ENCODE measurements at regions of chr18 and their contacts with region 1.

Region 1: DNA sequence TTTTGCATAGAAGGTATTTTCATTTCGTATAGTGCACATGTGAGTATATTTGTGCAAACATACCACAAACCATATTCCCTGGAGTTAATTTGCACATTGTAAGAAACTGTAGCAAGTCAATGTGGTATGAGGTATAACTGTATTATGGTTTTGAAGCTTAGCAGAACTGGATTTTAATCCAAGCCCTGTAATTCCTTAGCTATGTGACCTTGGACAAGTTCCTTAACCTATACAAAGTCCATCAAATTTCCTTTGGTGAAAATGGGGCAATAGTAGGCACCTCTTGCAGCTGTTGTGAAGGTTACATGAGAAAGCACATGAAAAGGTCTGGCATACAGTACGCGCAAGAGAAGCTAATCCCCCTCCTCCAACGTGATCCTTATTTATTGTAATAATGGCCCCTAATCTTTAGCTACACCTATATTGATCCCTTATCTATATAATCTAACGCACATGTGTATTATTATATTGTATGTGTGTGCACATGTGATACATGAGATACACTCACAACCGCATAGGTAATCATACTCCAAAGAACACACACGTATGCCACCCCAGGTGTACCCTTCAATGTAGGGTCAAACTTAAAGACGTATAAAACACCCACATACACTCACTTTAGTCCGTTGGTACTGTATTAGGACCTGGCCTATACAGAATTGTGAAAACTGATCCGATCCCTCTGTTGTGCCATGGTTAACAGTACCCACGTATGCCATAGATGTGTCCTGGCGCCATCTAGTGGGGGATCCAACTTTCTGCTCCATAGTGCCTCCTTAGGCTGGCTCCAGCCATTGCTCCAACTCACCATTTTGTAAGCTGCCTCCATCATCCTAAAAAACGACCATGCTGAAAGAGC is 402.9 kb upstream of the SLC14A2 start:
- DNase-seq: peak; percentile 81
- H3K4me3 Mint-ChIP-seq: no peak overlapping the region
- H3K27ac Mint-ChIP-seq: no peak overlapping the region
- H3K4me1 Mint-ChIP-seq: no peaks in the 10 kb centered on the region
- H3K27me3 Mint-ChIP-seq: peaks cover 11% of the 10 kb centered on the region

Region 2: DNA sequence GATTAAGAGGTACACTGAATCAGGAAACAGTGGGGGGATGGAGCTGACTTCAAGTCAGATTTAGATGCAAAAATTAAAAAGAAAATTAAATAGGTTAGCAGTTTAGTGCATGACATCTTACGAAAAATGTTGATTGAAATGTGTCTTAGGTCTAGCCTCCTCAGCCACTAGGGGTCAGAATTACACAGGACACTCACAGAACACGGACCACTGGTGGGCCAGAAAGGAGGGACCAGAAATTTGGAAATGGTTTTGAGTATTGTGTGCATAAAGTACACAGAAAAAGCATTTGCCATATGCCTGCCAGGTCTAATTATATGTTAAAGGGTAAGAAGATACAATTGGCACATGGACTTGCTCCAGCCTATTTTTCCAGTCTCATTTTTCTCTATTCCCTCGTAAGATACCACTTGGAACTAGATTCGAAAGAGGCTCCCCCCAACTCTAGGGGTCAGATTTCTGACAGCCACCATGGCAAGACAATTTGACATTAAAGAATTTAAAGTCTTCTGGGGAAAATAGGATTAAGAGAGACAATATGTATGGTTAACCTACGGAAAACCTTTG is 1082.0 kb before region 1 on chr18:
- CTCF ChIA-PET with region 1: no interaction called
- POLR2A ChIA-PET with region 1: no interaction called
- intact Hi-C with region 1: loop called (anchors 10 kb)
- DNase-seq: no peak
- H3K4me3 Mint-ChIP-seq: no peak overlapping the region
- H3K27ac Mint-ChIP-seq: no peak overlapping the region
- H3K4me1 Mint-ChIP-seq: no peaks in the 10 kb centered on the region
- H3K27me3 Mint-ChIP-seq: no peaks in the 10 kb centered on the region

Region 3: DNA sequence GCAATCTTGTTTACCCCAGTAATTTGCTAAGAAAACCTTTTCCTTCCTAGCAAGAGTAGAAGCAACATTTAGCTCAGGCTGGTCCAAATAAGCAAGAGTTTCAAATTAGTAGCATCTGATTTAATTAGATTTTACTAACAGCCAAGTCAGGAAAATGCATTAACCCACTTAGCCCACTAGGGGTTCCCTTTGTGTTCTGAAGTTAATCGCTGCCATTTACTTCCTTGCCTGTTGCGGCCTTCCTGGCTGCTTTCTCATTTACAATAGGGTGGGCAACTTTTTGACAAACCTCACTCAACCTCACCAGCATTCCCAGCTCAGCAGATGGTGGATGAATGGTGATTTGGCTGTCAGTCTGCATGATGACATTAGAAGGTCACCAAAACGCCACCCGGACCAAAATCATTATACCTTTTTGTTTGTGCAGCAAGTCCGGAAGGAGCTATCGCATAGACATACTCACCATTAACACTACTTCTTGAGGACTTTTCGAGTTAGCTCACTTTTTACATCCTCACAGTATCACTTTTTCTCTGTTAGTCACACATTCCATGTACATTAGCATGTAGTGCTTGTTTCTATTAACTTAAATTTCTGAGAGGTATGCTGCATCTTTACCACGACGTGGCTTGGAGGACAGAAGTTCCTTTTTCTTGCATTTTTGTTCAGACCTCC is 633.2 kb before region 1 on chr18:
- CTCF ChIA-PET with region 1: interaction called, 7 read pairs
- POLR2A ChIA-PET with region 1: no interaction called
- intact Hi-C with region 1: loop called (anchors 2 kb)
- DNase-seq: no peak
- H3K4me3 Mint-ChIP-seq: no peak overlapping the region
- H3K27ac Mint-ChIP-seq: no peak overlapping the region
- H3K4me1 Mint-ChIP-seq: no peaks in the 10 kb centered on the region
- H3K27me3 Mint-ChIP-seq: peaks cover 2% of the 10 kb centered on the region

Region 4: GRCh38 chr18:44901283-44901682 is 311.1 kb before region 1 on chr18:
- CTCF ChIA-PET with region 1: interaction called, 4 read pairs
- POLR2A ChIA-PET with region 1: no interaction called
- intact Hi-C with region 1: loop called (anchors 2 kb)
- DNase-seq: no peak
- H3K4me3 Mint-ChIP-seq: no peak overlapping the region
- H3K27ac Mint-ChIP-seq: no peak overlapping the region
- H3K4me1 Mint-ChIP-seq: peaks cover 11% of the 10 kb centered on the region
- H3K27me3 Mint-ChIP-seq: peaks cover 11% of the 10 kb centered on the region

Region 5: GRCh38 chr18:44954257-44954656 is 258.2 kb before region 1 on chr18:
- CTCF ChIA-PET with region 1: no interaction called
- POLR2A ChIA-PET with region 1: no interaction called
- intact Hi-C with region 1: no loop called
- DNase-seq: no peak
- H3K4me3 Mint-ChIP-seq: no peak overlapping the region
- H3K27ac Mint-ChIP-seq: no peak overlapping the region
- H3K4me1 Mint-ChIP-seq: no peaks in the 10 kb centered on the region
- H3K27me3 Mint-ChIP-seq: peaks cover 8% of the 10 kb centered on the region

Region 6: GRCh38 chr18:45275367-45276113 is 63.1 kb after region 1 on chr18:
- CTCF ChIA-PET with region 1: no interaction called
- POLR2A ChIA-PET with region 1: no interaction called
- intact Hi-C with region 1: no loop called
- DNase-seq: no peak
- H3K4me3 Mint-ChIP-seq: no peak overlapping the region
- H3K27ac Mint-ChIP-seq: no peak overlapping the region
- H3K4me1 Mint-ChIP-seq: no peaks in the 10 kb centered on the region
- H3K27me3 Mint-ChIP-seq: no peaks in the 10 kb centered on the region

Region 7: GRCh38 chr18:45738658-45739057 is 526.2 kb after region 1 on chr18:
- CTCF ChIA-PET with region 1: no interaction called
- POLR2A ChIA-PET with region 1: no interaction called
- intact Hi-C with region 1: no loop called
- DNase-seq: no peak
- H3K4me3 Mint-ChIP-seq: no peak overlapping the region
- H3K27ac Mint-ChIP-seq: no peak overlapping the region
- H3K4me1 Mint-ChIP-seq: no peaks in the 10 kb centered on the region
- H3K27me3 Mint-ChIP-seq: no peaks in the 10 kb centered on the region

Region 8: GRCh38 chr18:45802608-45803492 is 590.4 kb after region 1 on chr18:
- CTCF ChIA-PET with region 1: no interaction called
- POLR2A ChIA-PET with region 1: no interaction called
- intact Hi-C with region 1: no loop called
- DNase-seq: peak; percentile 52
- H3K4me3 Mint-ChIP-seq: no peak overlapping the region
- H3K27ac Mint-ChIP-seq: no peak overlapping the region
- H3K4me1 Mint-ChIP-seq: peaks cover 8% of the 10 kb centered on the region
- H3K27me3 Mint-ChIP-seq: peaks cover 7% of the 10 kb centered on the region